ENCODE measurements at regions of chr14 and their contacts with region 1.

Region 1: GRCh38 chr14:64841121-64841651 is 38.5 kb downstream of the SPTB start:
- DNase-seq: peak; percentile 82 to 90
- ATAC-seq: peak; percentile 67 to 68
- H3K4me3 ChIP-seq: peak overlapping the region in 3 of 4 donors; percentile 15 to 38 (median 30)
- H3K27ac ChIP-seq: peak overlapping the region; percentile 87 to 99 (median 95)
- H3K4me1 ChIP-seq: peaks cover 83 to 92% of the 10 kb centered on the region in 2 donors
- H3K27me3 ChIP-seq: no peaks in the 10 kb centered on the region
- CTCF ChIP-seq: peak; percentile 64 to 90 (median 87)
- POLR2A ChIP-seq: no peak

Region 2: DNA sequence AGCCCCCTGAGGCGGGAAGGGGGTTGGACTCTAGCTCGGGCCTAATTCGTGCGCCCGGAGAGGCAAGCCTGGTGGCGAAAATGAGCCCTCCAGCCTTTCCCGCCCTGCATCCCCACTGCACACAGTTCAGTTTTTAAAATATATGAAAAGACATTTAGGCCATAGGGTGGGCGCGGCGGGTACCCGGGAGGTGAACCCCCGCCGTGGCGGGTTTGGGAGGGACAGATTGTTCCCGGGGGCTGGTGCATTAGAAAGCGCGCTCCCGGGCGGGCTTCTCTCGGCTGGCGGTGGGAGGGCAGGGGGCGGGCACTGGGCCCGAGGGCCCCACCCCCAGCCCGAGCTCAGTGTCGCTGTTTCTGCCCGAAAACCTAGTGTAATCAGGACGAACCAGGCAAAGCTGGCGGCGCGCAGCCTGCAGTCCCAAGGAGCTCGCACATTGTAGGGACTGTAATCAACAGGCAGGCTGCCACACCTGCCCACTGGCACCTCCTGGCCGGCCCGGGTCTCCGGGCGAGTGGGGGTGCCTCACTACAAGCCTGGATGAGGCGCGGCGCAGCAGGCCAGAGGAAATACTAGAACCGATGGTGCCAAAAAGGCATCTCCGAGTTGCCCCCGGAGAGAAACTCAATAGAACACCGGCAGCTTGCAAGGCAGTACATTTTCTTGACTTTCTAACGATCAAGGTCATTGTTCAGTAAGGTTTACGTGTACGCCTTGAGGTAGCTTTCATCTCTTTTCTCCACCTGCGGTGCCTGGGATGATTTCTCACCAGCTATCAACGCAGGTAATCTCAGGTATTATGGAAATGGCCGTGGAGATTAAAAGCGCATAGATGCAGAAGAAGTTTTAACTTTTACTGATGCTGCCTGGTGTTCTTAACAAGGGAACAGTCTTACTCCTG is 39.3 kb after region 1 on chr14:
- in situ Hi-C with region 1: loop called in 1 of 4 experiments (anchors 5 kb)
- intact Hi-C with region 1: loop called (anchors 1 kb)
- DNase-seq: peak in 1 of 2 donors; percentile 38
- ATAC-seq: peak; percentile 16 to 29
- H3K4me3 ChIP-seq: peak overlapping the region; percentile 73 to 84 (median 75)
- H3K27ac ChIP-seq: peak overlapping the region; percentile 98 to 100 (median 98)
- H3K4me1 ChIP-seq: peaks cover 19 to 38% of the 10 kb centered on the region in 2 donors
- H3K27me3 ChIP-seq: peaks cover 0 to 2% (median 0%) of the 10 kb centered on the region in 3 donors
- CTCF ChIP-seq: peak in 1 of 5 experiments; percentile 29
- POLR2A ChIP-seq: no peak

Measured in gastrocnemius medialis (tissue), 4 donors.